PC-9 (cell line): ENCODE measurements at regions of chr10 and their contacts with region 1.

Region 1: GRCh38 chr10:18610517-18610916 is 40.9 kb downstream of the NSUN6 start:
- DNase-seq: peak; percentile 55 to 90
- H3K4me3 ChIP-seq: no peak overlapping the region
- H3K27ac ChIP-seq: peak overlapping the region; percentile 66
- H3K4me1 ChIP-seq: peaks cover 55% of the 10 kb centered on the region
- H3K27me3 ChIP-seq: no peaks in the 10 kb centered on the region
- CTCF ChIP-seq: no peak

Region 2: DNA sequence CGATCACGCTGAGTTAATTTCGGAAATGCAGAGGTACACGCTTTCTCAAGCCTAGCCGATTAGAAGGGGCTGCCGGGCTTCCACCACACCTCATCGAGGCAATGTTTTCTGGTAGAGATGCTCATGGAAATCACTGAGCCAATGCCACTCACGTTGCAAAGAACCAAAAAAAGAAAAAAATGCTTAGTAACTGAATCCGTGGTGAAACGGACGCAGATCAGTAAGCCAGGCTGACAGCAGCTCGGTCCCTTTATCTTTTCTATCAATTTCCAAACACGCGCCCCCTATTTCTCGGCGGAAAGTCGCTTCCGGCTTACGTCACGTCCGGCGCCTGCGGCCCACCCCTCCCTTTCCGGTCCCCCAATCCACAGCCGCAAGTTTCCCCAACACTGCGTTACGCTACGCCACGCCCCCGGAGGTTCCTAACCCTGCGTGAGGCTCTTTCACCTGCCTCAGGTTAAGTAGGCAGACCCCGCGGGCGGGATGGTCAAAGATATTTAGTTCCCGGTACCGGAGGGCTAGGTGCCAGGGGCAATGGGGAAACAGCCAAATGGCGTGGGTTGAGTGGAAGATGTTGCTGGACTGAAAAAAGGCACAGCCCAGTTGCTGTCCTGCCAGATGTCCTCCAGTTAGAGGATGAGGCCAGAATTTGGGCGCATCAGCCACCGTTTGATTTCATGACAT is 40.9 kb after region 1 on chr10 and contains the start of gene NSUN6:
- CTCF ChIA-PET with region 1: interaction called, 6 read pairs
- POLR2A ChIA-PET with region 1: interaction called, 4 read pairs
- intact Hi-C with region 1: loop called (anchors 5 kb)
- DNase-seq: peak; percentile 71 to 84
- H3K4me3 ChIP-seq: peak within 1 kb of the TSS; percentile 96
- H3K27ac ChIP-seq: peak within 1 kb of the TSS; percentile 66
- H3K4me1 ChIP-seq: peaks cover 9% of the 10 kb centered on the region
- H3K27me3 ChIP-seq: no peaks in the 10 kb centered on the region
- CTCF ChIP-seq: no peak
- total RNA-seq, gene NSUN6: 11.9 and 12.9 TPM in 2 replicates

Region 3: DNA sequence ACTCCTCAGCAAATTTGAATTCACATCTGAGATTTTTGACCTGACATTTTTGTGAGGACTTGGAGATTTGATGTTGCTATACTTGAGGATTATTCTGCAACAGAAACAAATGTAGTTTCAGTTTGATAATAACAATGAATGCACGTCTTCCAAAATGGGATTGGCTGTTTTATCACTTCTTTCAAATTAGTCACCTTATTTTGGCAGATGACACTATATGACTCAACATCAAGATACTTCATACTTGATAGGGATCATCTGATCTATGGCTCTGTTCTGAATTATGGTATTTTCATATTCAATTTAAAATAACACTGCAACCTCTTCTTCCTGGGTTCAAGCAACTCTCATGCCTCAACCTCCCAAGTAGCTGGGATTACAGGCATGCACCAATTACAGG is 72.9 kb after region 1 on chr10:
- CTCF ChIA-PET with region 1: no interaction called
- POLR2A ChIA-PET with region 1: no interaction called
- intact Hi-C with region 1: loop called (anchors 1 kb)
- DNase-seq: no peak
- H3K4me3 ChIP-seq: no peak overlapping the region
- H3K27ac ChIP-seq: no peak overlapping the region
- H3K4me1 ChIP-seq: no peaks in the 10 kb centered on the region
- H3K27me3 ChIP-seq: no peaks in the 10 kb centered on the region
- CTCF ChIP-seq: no peak

Region 4: DNA sequence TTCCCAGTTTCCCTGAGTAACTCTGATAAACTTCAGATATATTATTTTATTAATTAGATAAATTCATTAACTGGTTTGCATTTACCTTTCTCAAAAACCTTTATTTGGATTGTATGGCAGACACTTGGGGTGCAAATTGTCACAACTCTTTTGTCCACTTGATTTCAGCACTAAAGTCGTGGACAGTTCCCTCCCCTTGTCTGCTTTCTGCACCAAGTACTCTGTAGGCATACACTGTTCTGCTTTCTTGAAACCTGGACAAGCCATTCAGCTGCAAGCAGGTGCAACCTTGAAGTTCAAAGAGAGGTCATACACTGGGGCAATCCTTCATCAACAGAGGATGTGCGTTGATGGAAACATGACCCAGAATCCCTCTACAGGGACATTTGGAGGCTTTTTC is 211.6 kb after region 1 on chr10:
- CTCF ChIA-PET with region 1: no interaction called
- POLR2A ChIA-PET with region 1: no interaction called
- intact Hi-C with region 1: no loop called
- DNase-seq: no peak
- H3K4me3 ChIP-seq: no peak overlapping the region
- H3K27ac ChIP-seq: no peak overlapping the region
- H3K4me1 ChIP-seq: no peaks in the 10 kb centered on the region
- H3K27me3 ChIP-seq: no peaks in the 10 kb centered on the region
- CTCF ChIP-seq: no peak